GM13976 (cell line): ENCODE measurements at regions of chr10 and their contacts with region 1.

Region 1: GRCh38 chr10:116796910-116797513 is 52.3 kb upstream of the ENO4 start:
- DNase-seq: peak; percentile 82
- CTCF ChIP-seq: peak; percentile 91

Region 2: GRCh38 chr10:116690356-116691322 is 106.4 kb before region 1 on chr10:
- in situ Hi-C with region 1: loop called (anchors 25 kb)
- DNase-seq: no peak
- CTCF ChIP-seq: no peak

Region 3: GRCh38 chr10:117174439-117175214 is 377.6 kb after region 1 on chr10:
- in situ Hi-C with region 1: loop called (anchors 5 kb)
- DNase-seq: peak; percentile 83
- CTCF ChIP-seq: peak; percentile 75